Activated CD4-positive, alpha-beta T cell treated with anti-CD3 and anti-CD28 coated beads, Interleukin-2, amount 10 ng/mL, durations not matched to agents 24 days and 14 days (primary cell): ENCODE measurements at regions of chr10 and their contacts with region 1.

Region 1: GRCh38 chr10:69179743-69180524 is at the start of gene SUPV3L1:
- DNase-seq: peak; percentile 96
- H3K4me3 Mint-ChIP-seq: peak within 1 kb of the TSS; percentile 88
- H3K27ac Mint-ChIP-seq: peak within 1 kb of the TSS; percentile 99
- H3K4me1 Mint-ChIP-seq: peaks cover 25% of the 10 kb centered on the region
- H3K27me3 Mint-ChIP-seq: no peaks in the 10 kb centered on the region
- total RNA-seq, gene SUPV3L1: 58.3 and 63.9 TPM in 2 replicates

Region 2: GRCh38 chr10:68526626-68527307 is 653.2 kb before region 1 on chr10:
- intact Hi-C with region 1: loop called (anchors 2 kb)
- DNase-seq: no peak
- H3K4me3 Mint-ChIP-seq: peak overlapping the region; percentile 97
- H3K27ac Mint-ChIP-seq: peak overlapping the region; percentile 87
- H3K4me1 Mint-ChIP-seq: peaks cover 6% of the 10 kb centered on the region
- H3K27me3 Mint-ChIP-seq: no peaks in the 10 kb centered on the region

Region 3: DNA sequence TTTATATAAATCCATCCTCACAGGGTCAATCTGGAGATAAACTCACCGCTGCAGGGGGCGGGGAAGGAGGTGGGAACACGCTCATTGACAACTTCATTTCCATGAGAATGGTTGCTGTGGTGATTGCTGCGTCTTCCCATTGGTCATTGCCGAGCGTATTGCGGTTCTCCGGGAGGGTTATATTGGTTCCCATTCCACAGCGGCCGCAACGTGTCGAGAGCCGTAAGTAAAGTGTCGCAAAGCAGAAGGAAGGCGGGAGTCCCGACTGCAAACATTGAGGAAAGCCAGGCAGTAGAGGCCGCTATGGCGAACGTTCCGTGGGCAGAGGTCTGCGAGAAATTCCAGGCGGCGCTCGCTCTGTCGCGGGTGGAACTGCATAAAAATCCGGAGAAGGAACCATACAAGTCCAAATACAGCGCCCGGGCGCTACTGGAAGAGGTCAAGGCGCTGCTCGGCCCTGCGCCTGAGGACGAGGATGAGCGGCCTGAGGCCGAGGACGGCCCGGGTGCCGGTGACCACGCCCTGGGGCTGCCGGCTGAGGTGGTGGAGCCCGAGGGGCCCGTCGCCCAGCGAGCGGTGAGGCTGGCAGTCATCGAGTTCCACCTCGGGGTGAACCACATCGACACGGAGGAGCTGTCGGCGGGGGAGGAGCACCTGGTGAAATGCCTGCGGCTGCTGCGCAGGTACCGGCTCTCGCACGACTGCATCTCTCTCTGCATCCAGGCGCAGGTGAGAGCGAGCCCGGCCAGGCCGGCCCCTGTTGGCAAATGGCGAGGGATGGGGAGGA is 191.2 kb before region 1 on chr10 and contains the start of gene KIFBP:
- intact Hi-C with region 1: loop called (anchors 2 kb)
- DNase-seq: peak; percentile 95
- H3K4me3 Mint-ChIP-seq: peak within 1 kb of the TSS; percentile 89
- H3K27ac Mint-ChIP-seq: peak within 1 kb of the TSS; percentile 91
- H3K4me1 Mint-ChIP-seq: peaks cover 41% of the 10 kb centered on the region
- H3K27me3 Mint-ChIP-seq: no peaks in the 10 kb centered on the region
- total RNA-seq, gene KIFBP: 15.0 TPM in 2 replicates

Region 4: GRCh38 chr10:69018613-69019012 is 161.3 kb before region 1 on chr10:
- intact Hi-C with region 1: no loop called
- DNase-seq: no peak
- H3K4me3 Mint-ChIP-seq: no peak overlapping the region
- H3K27ac Mint-ChIP-seq: peak overlapping the region; percentile 35
- H3K4me1 Mint-ChIP-seq: peaks cover 2% of the 10 kb centered on the region
- H3K27me3 Mint-ChIP-seq: no peaks in the 10 kb centered on the region

Region 5: GRCh38 chr10:69141304-69141703 is 38.6 kb before region 1 on chr10:
- intact Hi-C with region 1: loop called (anchors 5 kb)
- DNase-seq: no peak
- H3K4me3 Mint-ChIP-seq: no peak overlapping the region
- H3K27ac Mint-ChIP-seq: no peak overlapping the region
- H3K4me1 Mint-ChIP-seq: peaks cover 7% of the 10 kb centered on the region
- H3K27me3 Mint-ChIP-seq: no peaks in the 10 kb centered on the region

Region 6: DNA sequence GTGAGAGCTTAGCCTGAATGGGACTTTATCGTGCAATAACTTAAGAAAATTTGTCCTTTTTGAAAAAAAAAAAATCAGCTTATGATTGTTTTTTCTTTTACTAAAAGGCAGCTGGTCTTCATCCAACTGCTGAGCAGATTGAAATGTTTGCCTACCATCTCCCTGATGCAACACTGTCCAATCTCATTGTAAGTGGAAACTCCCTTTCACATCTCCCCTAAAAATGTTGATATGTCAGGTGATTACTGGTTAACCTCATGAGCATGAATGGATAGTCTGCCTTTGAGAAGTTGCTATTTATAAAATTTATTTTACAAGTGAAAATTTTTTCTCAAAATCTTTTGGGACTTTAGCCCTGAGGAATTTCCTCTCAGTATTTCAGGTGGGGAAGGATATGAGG is 22.4 kb after region 1 on chr10:
- intact Hi-C with region 1: loop called (anchors 2 kb)
- DNase-seq: peak; percentile 77
- H3K4me3 Mint-ChIP-seq: peak overlapping the region; percentile 62
- H3K27ac Mint-ChIP-seq: peak overlapping the region; percentile 66
- H3K4me1 Mint-ChIP-seq: peaks cover 43% of the 10 kb centered on the region
- H3K27me3 Mint-ChIP-seq: no peaks in the 10 kb centered on the region

Region 7: GRCh38 chr10:69215405-69216176 is 35.7 kb after region 1 on chr10:
- intact Hi-C with region 1: loop called (anchors 2 kb)
- DNase-seq: peak; percentile 78
- H3K4me3 Mint-ChIP-seq: peak overlapping the region; percentile 57
- H3K27ac Mint-ChIP-seq: peak overlapping the region; percentile 79
- H3K4me1 Mint-ChIP-seq: peaks cover 39% of the 10 kb centered on the region
- H3K27me3 Mint-ChIP-seq: no peaks in the 10 kb centered on the region